ENCODE measurements at regions of chr17 and their contacts with region 1.

Region 1: GRCh38 chr17:28293994-28294393 is 25.0 kb upstream of the TMEM97 start:
- DNase-seq: no peak
- ATAC-seq: no peak
- H3K4me3 ChIP-seq: no peak overlapping the region
- H3K27ac ChIP-seq: no peak overlapping the region
- H3K4me1 ChIP-seq: no peaks in the 10 kb centered on the region
- H3K27me3 ChIP-seq: no peaks in the 10 kb centered on the region
- CTCF ChIP-seq: no peak

Region 2: GRCh38 chr17:27550974-27551505 is 743.0 kb before region 1 on chr17:
- CTCF ChIA-PET with region 1: no interaction called
- POLR2A ChIA-PET with region 1: interaction called, 10 read pairs
- in situ Hi-C with region 1: no loop called
- intact Hi-C with region 1: no loop called
- DNase-seq: no peak
- ATAC-seq: no peak
- H3K4me3 ChIP-seq: no peak overlapping the region
- H3K27ac ChIP-seq: peak overlapping the region; percentile 64
- H3K4me1 ChIP-seq: peaks cover 38% of the 10 kb centered on the region
- H3K27me3 ChIP-seq: no peaks in the 10 kb centered on the region
- CTCF ChIP-seq: no peak

Region 3: GRCh38 chr17:28282596-28282995 is 11.4 kb before region 1 on chr17:
- CTCF ChIA-PET with region 1: no interaction called
- POLR2A ChIA-PET with region 1: no interaction called
- in situ Hi-C with region 1: no loop called
- intact Hi-C with region 1: no loop called
- DNase-seq: no peak
- ATAC-seq: no peak
- H3K4me3 ChIP-seq: no peak overlapping the region
- H3K27ac ChIP-seq: no peak overlapping the region
- H3K4me1 ChIP-seq: no peaks in the 10 kb centered on the region; the same call in 1 of the 2 replicates
- H3K27me3 ChIP-seq: no peaks in the 10 kb centered on the region
- CTCF ChIP-seq: no peak

Measured in Panc1 (cell line).